ENCODE measurements at regions of chr5 and their contacts with region 1.

Region 1: GRCh38 chr5:168291464-168291961 is at the start of gene WWC1:
- DNase-seq: no peak
- total RNA-seq, gene WWC1: 0.51 TPM

Region 2: GRCh38 chr5:168409580-168410458 is 118.3 kb after region 1 on chr5:
- intact Hi-C with region 1: no loop called
- DNase-seq: no peak

Region 3: DNA sequence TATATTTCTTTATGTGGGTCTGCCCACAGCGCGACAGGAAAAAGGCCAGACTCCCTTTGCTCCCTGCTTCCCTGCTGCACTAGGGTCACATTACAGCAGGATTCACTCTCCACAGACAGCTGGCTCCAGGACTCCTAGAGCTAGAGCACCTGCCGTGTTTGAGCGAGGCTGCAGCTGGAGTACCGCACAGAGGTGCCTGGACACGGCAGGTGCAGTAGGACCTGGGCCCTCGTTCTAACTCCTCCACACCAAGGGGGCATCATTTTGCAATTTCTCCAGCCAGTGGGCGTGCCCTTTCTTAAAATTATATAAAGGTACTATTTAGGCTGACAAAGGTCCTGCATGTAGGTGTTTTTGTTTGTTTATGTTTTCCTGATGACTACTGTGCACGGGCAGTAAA is 163.0 kb after region 1 on chr5:
- intact Hi-C with region 1: loop called (anchors 10 kb)
- DNase-seq: no peak